ENCODE measurements at regions of chr19 and their contacts with region 1.

Region 1: GRCh38 chr19:58519355-58520256 is at the start of gene ZBTB45:
- DNase-seq: peak; percentile 90 to 99
- ATAC-seq: peak; percentile 85 to 88
- H3K4me3 ChIP-seq: peak within 1 kb of the TSS; percentile 65
- H3K27ac ChIP-seq: peak within 1 kb of the TSS; percentile 86 to 92
- H3K4me1 ChIP-seq: peaks cover 16% of the 10 kb centered on the region
- CTCF ChIP-seq: peak; percentile 77
- EP300 ChIP-seq: peak in 1 of 2 experiments; percentile 41; a peak in 1 of 5 replicates
- POLR2A ChIP-seq: peak; percentile 84
- RAD21 ChIP-seq: peak; percentile 83 to 92
- polyA plus RNA-seq, gene ZBTB45: 6.2 and 6.4 TPM in 2 replicates

Region 2: DNA sequence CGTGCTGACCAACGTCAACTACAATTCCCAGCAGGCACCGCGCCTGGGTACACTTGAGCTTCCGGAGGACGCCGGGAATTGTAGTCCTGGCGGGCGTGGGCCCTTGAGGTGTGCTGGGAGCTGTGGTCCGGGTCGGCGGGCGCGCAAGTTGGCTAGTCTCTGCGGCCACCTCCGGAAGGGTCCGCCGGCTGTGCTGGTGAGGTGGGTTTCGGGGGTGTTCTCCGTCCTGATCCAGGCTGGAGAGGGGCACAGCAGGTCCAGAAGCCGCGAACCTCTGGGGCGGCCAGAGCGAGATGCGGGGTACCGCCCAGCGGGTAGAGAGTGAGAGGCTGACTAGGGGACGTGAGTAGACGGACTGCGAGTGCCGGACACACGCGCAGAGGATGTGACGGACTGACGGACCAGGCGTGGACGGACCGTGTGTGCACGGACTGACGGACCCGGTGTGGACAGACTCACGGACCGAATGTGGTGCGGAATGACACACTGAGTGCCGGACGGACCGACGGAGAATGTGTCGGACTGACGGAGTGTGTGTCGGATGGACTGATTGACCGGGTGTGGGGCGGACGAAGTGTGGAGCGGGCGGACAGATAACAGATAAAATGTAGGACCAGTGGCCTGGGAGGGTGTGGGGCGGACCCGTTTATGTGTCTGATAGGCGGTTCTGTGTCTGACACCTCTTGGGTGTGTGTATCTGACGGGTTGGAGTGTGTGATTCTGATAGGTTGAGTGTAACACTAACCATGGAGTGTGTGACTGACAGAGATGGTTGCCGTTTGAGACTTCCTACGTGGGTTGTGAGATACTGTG is 192.5 kb before region 1 on chr19 and contains the start of gene ZSCAN22:
- CTCF ChIA-PET with region 1: interaction called, 13 read pairs
- POLR2A ChIA-PET with region 1: interaction called, 9 read pairs
- DNase-seq: peak; percentile 99
- ATAC-seq: peak; percentile 96 to 97
- H3K4me3 ChIP-seq: peak within 1 kb of the TSS; percentile 69
- H3K27ac ChIP-seq: peak within 1 kb of the TSS; percentile 88 to 95
- H3K4me1 ChIP-seq: peaks cover 13% of the 10 kb centered on the region; the same call in 2 of the 3 replicates
- CTCF ChIP-seq: no peak
- EP300 ChIP-seq: no peak
- POLR2A ChIP-seq: peak; percentile 59
- RAD21 ChIP-seq: peak in 1 of 2 experiments; percentile 40; a peak in 1 of 5 replicates
- polyA plus RNA-seq, gene ZSCAN22: 4.4 and 5.3 TPM in 2 replicates

Region 3: GRCh38 chr19:58453743-58454142 is 65.9 kb before region 1 on chr19:
- CTCF ChIA-PET with region 1: interaction called, 14 read pairs
- POLR2A ChIA-PET with region 1: interaction called, 4 read pairs
- DNase-seq: no peak
- ATAC-seq: no peak
- H3K4me3 ChIP-seq: no peak overlapping the region
- H3K27ac ChIP-seq: no peak overlapping the region
- H3K4me1 ChIP-seq: no peaks in the 10 kb centered on the region
- CTCF ChIP-seq: no peak
- EP300 ChIP-seq: no peak
- POLR2A ChIP-seq: no peak
- RAD21 ChIP-seq: no peak

Region 4: DNA sequence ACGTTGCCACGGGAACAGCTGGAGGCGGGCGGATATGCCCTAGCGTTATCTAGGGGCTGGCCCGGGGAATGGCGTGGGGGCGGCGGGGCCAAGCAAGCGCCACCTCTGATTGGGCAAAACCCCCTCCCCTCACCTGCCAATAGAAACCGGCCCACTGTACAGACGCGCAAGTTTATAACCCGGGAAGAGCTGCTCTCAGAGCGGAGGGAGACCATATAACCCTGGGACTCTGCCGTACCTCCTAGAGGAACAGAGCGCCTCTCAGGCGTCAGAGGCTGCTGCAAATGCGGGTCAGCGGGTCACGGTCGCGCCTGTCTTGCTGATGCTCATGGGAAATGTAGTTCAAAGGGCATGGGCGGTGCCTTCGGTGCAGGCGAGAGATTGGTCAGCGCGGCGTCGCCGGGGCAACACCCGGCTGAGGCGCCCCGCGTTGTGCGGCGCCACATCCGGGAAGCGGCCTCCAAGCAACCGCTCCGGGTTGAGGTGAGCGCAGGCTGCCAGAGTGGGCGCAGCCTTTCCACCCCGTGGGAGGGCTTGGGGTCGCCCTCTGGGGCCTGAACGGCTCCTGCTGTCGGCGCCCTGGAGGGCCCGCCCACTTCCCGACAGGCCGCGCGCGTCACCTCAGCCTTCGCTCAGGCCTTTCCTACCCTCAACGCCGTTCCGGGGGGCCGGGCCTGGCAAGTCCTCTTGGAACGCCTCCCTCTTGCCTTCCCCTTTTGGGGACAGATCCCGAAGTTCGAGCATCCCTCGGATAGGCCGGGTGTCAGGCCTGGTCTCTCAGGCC is 43.7 kb before region 1 on chr19 and contains the start of gene ZNF446:
- CTCF ChIA-PET with region 1: interaction called, 39 read pairs
- POLR2A ChIA-PET with region 1: interaction called, 5 read pairs
- DNase-seq: peak; percentile 98 to 99
- ATAC-seq: peak; percentile 84 to 93
- H3K4me3 ChIP-seq: peak within 1 kb of the TSS; percentile 57
- H3K27ac ChIP-seq: peak within 1 kb of the TSS; percentile 76 to 93
- H3K4me1 ChIP-seq: peaks cover 14% of the 10 kb centered on the region; the same call in 2 of the 3 replicates
- CTCF ChIP-seq: no peak
- EP300 ChIP-seq: no peak
- POLR2A ChIP-seq: peak; percentile 42; the same call in 1 of the 2 replicates
- RAD21 ChIP-seq: peak in 1 of 2 experiments; percentile 12; a peak in 1 of 5 replicates
- polyA plus RNA-seq, gene ZNF446: 6.2 and 7.4 TPM in 2 replicates

Region 5: GRCh38 chr19:58531034-58531840 is 11.6 kb after region 1 on chr19:
- CTCF ChIA-PET with region 1: interaction called, 70 read pairs
- POLR2A ChIA-PET with region 1: interaction called, 9 read pairs
- DNase-seq: no peak
- ATAC-seq: peak; percentile 18 to 20; a peak in 2 of 6 replicates
- H3K4me3 ChIP-seq: no peak overlapping the region
- H3K27ac ChIP-seq: no peak overlapping the region
- H3K4me1 ChIP-seq: no peaks in the 10 kb centered on the region
- CTCF ChIP-seq: no peak
- EP300 ChIP-seq: no peak
- POLR2A ChIP-seq: no peak
- RAD21 ChIP-seq: no peak

Region 6: GRCh38 chr19:58558623-58559274 is 39.1 kb after region 1 on chr19:
- CTCF ChIA-PET with region 1: interaction called, 222 read pairs
- POLR2A ChIA-PET with region 1: interaction called, 85 read pairs
- DNase-seq: peak; percentile 93 to 100
- ATAC-seq: peak; percentile 45 to 76
- H3K4me3 ChIP-seq: peak overlapping the region; percentile 78
- H3K27ac ChIP-seq: peak overlapping the region; percentile 95 to 99
- H3K4me1 ChIP-seq: peaks cover 37% of the 10 kb centered on the region
- CTCF ChIP-seq: no peak
- EP300 ChIP-seq: no peak
- POLR2A ChIP-seq: peak; percentile 68
- RAD21 ChIP-seq: no peak

Measured in A549 (cell line).